HepG2 (cell line): ENCODE measurements at regions of chr5 and their contacts with region 1.

Region 1: GRCh38 chr5:112995764-112996618 is 19.4 kb downstream of the DCP2 start:
- DNase-seq: peak; percentile 50
- ATAC-seq: peak; percentile 82
- H3K4me3 ChIP-seq: no peak overlapping the region
- H3K27ac ChIP-seq: no peak overlapping the region
- H3K4me1 ChIP-seq: 0 out of 2 replicates have a peak, but pooled peaks cover 10% of the 10 kb centered on the region
- H3K27me3 ChIP-seq: no peaks in the 10 kb centered on the region
- CTCF ChIP-seq: peak; percentile 87
- EP300 ChIP-seq: no peak
- POLR2A ChIP-seq: no peak
- RAD21 ChIP-seq: peak; percentile 72

Region 2: GRCh38 chr5:113020461-113021273 is 24.7 kb after region 1 on chr5:
- CTCF ChIA-PET with region 1: no interaction called
- POLR2A ChIA-PET with region 1: no interaction called
- in situ Hi-C with region 1: no loop called
- intact Hi-C with region 1: loop called (anchors 2 kb)
- DNase-seq: peak; percentile 90
- ATAC-seq: peak; percentile 98
- H3K4me3 ChIP-seq: peak overlapping the region in 1 of 3 experiments; percentile 2; a peak in 1 of 6 replicates
- H3K27ac ChIP-seq: peak overlapping the region; percentile 84
- H3K4me1 ChIP-seq: peaks cover 60% of the 10 kb centered on the region
- H3K27me3 ChIP-seq: no peaks in the 10 kb centered on the region
- CTCF ChIP-seq: no peak
- EP300 ChIP-seq: peak in 1 of 2 experiments; percentile 91; a peak in 2 of 4 replicates
- POLR2A ChIP-seq: no peak
- RAD21 ChIP-seq: no peak

Region 3: GRCh38 chr5:113034182-113034773 is 38.3 kb after region 1 on chr5:
- CTCF ChIA-PET with region 1: interaction called, 3 read pairs
- POLR2A ChIA-PET with region 1: no interaction called
- in situ Hi-C with region 1: no loop called
- intact Hi-C with region 1: loop called (anchors 5 kb)
- DNase-seq: no peak
- ATAC-seq: no peak; the same call in 1 of the 3 replicates
- H3K4me3 ChIP-seq: no peak overlapping the region
- H3K27ac ChIP-seq: no peak overlapping the region
- H3K4me1 ChIP-seq: no peaks in the 10 kb centered on the region
- H3K27me3 ChIP-seq: no peaks in the 10 kb centered on the region
- CTCF ChIP-seq: no peak
- EP300 ChIP-seq: no peak
- POLR2A ChIP-seq: no peak
- RAD21 ChIP-seq: no peak

Region 4: DNA sequence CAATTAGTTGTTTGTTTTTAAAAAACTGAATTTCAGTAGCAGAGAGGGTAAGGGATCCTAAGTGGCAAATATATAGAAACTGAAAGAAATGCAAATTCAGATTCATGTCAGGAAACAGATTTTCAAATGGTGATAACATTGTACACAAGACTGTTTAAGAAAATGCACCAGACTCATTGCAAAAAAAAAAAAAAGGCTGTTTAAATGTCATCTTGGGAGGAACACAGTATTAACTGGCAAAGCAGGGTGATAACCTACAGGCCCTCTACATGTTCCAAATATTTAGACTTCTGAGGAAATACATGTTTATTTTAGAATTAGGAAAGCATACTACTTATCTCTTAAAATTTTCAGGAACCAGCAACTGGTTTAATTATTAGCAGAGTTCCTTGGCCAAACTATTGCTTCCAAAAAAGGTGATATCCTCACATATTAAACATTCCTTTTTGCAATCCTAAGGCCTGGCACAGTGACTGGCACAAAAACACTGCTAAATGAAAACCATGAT is 324.3 kb after region 1 on chr5:
- CTCF ChIA-PET with region 1: no interaction called
- POLR2A ChIA-PET with region 1: no interaction called
- in situ Hi-C with region 1: loop called (anchors 10 kb)
- intact Hi-C with region 1: no loop called
- DNase-seq: no peak
- ATAC-seq: no peak
- H3K4me3 ChIP-seq: no peak overlapping the region
- H3K27ac ChIP-seq: no peak overlapping the region
- H3K4me1 ChIP-seq: peaks cover 12% of the 10 kb centered on the region
- H3K27me3 ChIP-seq: no peaks in the 10 kb centered on the region; a peak in 1 of 5 replicates
- CTCF ChIP-seq: no peak
- EP300 ChIP-seq: no peak
- POLR2A ChIP-seq: no peak
- RAD21 ChIP-seq: no peak

Region 5: GRCh38 chr5:113330533-113331208 is 334.7 kb after region 1 on chr5:
- CTCF ChIA-PET with region 1: interaction called, 6 read pairs
- POLR2A ChIA-PET with region 1: no interaction called
- in situ Hi-C with region 1: loop called (anchors 10 kb)
- intact Hi-C with region 1: loop called (anchors 1 kb)
- DNase-seq: peak; percentile 19
- ATAC-seq: peak; percentile 59
- H3K4me3 ChIP-seq: no peak overlapping the region
- H3K27ac ChIP-seq: no peak overlapping the region
- H3K4me1 ChIP-seq: no peaks in the 10 kb centered on the region
- H3K27me3 ChIP-seq: no peaks in the 10 kb centered on the region; a peak in 1 of 5 replicates
- CTCF ChIP-seq: peak; percentile 47; the same call in 1 of the 2 replicates
- EP300 ChIP-seq: no peak
- POLR2A ChIP-seq: no peak
- RAD21 ChIP-seq: no peak

Region 6: DNA sequence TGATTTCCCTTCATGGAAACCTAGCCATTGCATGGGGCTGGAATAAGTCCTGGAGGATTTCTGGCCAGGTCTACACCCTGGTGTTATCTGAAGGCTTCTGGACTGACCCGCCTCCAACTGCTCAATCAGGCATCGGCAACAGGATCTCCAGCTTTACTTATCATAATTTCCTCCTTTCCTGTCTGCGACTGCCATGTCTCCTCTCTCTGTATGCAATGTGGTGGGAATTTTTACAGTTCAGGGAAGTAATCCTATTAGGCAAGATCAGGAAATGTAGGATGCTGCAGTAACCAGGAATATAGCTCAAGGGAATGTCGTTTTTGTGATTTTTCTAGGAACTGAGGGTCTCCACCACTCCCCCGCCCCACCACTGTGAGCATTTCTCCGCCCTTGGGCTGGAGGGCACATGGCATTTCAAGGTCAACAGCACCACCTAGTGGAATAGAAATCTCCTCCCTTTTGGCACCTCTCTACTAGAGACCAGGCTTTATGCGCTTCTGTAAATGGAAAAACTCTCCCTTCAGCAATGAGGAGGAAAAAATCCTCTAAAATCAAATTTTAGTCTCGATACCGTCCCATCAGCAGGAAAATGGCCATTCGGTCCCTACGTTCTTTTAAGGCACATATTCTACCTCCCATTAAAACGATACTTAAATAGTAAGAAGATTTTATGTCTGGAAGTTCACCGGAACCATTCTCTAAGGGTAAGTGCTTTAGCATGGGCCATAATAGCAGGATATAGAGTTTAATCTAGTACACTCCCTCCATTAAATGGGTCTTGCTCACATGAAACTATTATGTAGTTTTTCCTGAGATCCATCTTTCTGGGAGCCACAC is 610.5 kb after region 1 on chr5:
- CTCF ChIA-PET with region 1: no interaction called
- POLR2A ChIA-PET with region 1: no interaction called
- in situ Hi-C with region 1: no loop called
- intact Hi-C with region 1: loop called (anchors 1 kb)
- DNase-seq: peak; percentile 61
- ATAC-seq: peak; percentile 100
- H3K4me3 ChIP-seq: peak overlapping the region in 1 of 3 experiments; percentile 11; a peak in 1 of 6 replicates
- H3K27ac ChIP-seq: no peak overlapping the region
- H3K4me1 ChIP-seq: 0 out of 2 replicates have a peak, but pooled peaks cover 7% of the 10 kb centered on the region
- H3K27me3 ChIP-seq: 0 out of 5 replicates have a peak, but pooled peaks cover 0 to 2% of the 10 kb centered on the region in 2 experiments
- CTCF ChIP-seq: peak; percentile 91
- EP300 ChIP-seq: no peak
- POLR2A ChIP-seq: no peak
- RAD21 ChIP-seq: peak; percentile 62